ENCODE measurements at regions of chr2 and their contacts with region 1.

Region 1: DNA sequence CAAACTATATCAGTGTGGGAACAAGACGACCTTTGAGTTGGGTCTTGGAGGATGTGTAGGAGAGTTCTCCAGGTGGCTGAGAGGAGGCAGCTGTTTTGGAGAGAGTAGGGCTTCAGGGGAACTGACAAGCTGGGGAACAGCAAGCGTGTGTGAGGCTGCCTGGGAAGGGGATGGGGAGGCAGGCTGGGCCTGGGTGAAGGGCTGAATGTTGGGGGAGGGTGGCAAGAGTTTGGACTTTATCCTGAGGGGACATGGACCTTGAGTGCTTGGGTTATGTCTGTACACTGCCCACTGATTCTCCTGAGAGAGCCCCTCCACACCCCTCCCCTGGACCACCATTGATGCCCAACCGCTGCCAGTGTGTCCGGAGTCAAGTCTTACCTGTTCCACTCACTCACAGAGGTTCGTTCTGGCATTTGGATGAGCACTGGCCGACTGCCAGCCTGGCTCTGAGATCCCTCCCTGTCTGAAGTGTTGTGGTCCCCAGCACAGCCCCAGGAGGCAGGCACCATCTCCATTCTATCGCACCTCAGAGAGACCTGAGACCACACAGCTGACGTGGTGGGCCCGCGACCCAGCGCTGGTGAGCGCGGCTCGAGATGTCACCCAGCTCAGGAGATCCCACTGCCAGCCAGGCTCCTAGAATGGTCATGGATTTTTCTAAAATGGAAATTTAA is 59.5 kb downstream of the DCDC2C start:
- DNase-seq: no peak
- H3K4me3 ChIP-seq: no peak overlapping the region
- H3K27ac ChIP-seq: no peak overlapping the region
- H3K4me1 ChIP-seq: no peaks in the 10 kb centered on the region
- H3K27me3 ChIP-seq: no peaks in the 10 kb centered on the region
- CTCF ChIP-seq: no peak

Region 2: DNA sequence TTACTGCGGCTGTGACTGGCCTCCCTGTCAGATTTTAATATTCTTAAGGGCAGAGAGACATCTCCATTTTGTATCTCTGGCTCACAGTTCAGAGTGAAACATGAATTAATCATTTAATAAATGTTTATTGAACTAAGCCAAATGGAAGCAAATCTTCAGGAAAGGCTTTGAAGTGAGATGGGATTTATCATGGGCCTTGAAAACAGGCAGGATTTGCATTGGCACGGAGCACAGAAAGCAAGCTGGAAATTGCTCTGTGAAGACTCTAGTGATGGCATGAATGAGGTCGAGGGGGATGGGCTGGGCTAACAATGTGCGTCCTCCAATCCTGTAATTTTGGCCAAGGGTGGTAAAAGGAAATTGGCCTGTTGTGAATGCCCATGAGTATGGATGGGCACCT is 1559.5 kb after region 1 on chr2:
- intact Hi-C with region 1: loop called (anchors 5 kb)
- DNase-seq: no peak
- H3K4me3 ChIP-seq: no peak overlapping the region
- H3K27ac ChIP-seq: no peak overlapping the region
- H3K4me1 ChIP-seq: no peaks in the 10 kb centered on the region
- H3K27me3 ChIP-seq: no peaks in the 10 kb centered on the region
- CTCF ChIP-seq: no peak

Measured in tibial artery (tissue), 4 donors.